ENCODE measurements at regions of chr9 and their contacts with region 1.

Region 1: GRCh38 chr9:15642369-15642962 is 89.6 kb downstream of the CCDC171 start:
- DNase-seq: peak; percentile 24
- H3K4me3 ChIP-seq: no peak overlapping the region
- H3K27ac ChIP-seq: no peak overlapping the region
- H3K4me1 ChIP-seq: no peaks in the 10 kb centered on the region
- H3K27me3 ChIP-seq: no peaks in the 10 kb centered on the region
- CTCF ChIP-seq: peak; percentile 35 to 57

Region 2: GRCh38 chr9:15824310-15824709 is 181.8 kb after region 1 on chr9:
- CTCF ChIA-PET with region 1: no interaction called
- dilution Hi-C with region 1: no loop called
- in situ Hi-C with region 1: no loop called
- intact Hi-C with region 1: loop called (anchors 5 kb)
- DNase-seq: no peak
- H3K4me3 ChIP-seq: no peak overlapping the region
- H3K27ac ChIP-seq: no peak overlapping the region
- H3K4me1 ChIP-seq: no peaks in the 10 kb centered on the region
- H3K27me3 ChIP-seq: no peaks in the 10 kb centered on the region
- CTCF ChIP-seq: no peak